H1 (cell line): ENCODE measurements at regions of chr11 and their contacts with region 1.

Region 1: GRCh38 chr11:131038597-131038996 is 122.3 kb upstream of the SNX19 start:
- DNase-seq: no peak
- H3K4me3 ChIP-seq: no peak overlapping the region
- H3K27ac ChIP-seq: no peak overlapping the region
- H3K4me1 ChIP-seq: no peaks in the 10 kb centered on the region
- H3K27me3 ChIP-seq: no peaks in the 10 kb centered on the region
- CTCF ChIP-seq: peak in 2 of 3 experiments; percentile 59 to 68; a peak in 3 of 4 replicates
- EP300 ChIP-seq: no peak
- POLR2A ChIP-seq: no peak
- RAD21 ChIP-seq: peak; percentile 76 to 79

Region 2: GRCh38 chr11:131025020-131025419 is 13.6 kb before region 1 on chr11:
- CTCF ChIA-PET with region 1: interaction called, 63 read pairs
- POLR2A ChIA-PET with region 1: interaction called, 3 read pairs
- DNase-seq: no peak
- H3K4me3 ChIP-seq: no peak overlapping the region
- H3K27ac ChIP-seq: no peak overlapping the region
- H3K4me1 ChIP-seq: no peaks in the 10 kb centered on the region
- H3K27me3 ChIP-seq: no peaks in the 10 kb centered on the region
- CTCF ChIP-seq: peak; percentile 72 to 93 (median 82)
- EP300 ChIP-seq: no peak
- POLR2A ChIP-seq: no peak
- RAD21 ChIP-seq: peak; percentile 93 to 94

Region 3: DNA sequence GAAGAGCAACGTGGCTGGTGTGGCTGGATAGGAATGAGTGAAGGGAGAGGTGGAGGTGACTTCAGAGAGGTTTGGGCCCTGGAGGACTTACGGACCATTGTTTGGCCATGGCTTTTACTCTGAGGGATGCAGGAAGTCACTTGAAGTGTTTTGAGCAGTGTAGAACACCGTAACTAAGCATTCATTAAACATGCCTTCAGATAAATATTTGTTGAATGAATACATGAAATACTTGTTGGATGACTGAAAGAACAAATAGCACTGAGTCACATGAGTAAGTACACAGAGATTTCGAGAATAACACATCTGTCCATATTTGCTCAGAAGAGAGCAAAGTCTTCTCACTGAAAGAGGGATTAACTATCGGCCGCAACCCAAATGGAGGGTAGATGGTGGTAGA is 60.4 kb after region 1 on chr11:
- CTCF ChIA-PET with region 1: no interaction called
- POLR2A ChIA-PET with region 1: no interaction called
- DNase-seq: no peak
- H3K4me3 ChIP-seq: no peak overlapping the region
- H3K27ac ChIP-seq: no peak overlapping the region
- H3K4me1 ChIP-seq: peaks cover 0 to 4% (median 1%) of the 10 kb centered on the region in 4 experiments; a peak in 2 of 7 replicates
- H3K27me3 ChIP-seq: no peaks in the 10 kb centered on the region
- CTCF ChIP-seq: no peak
- EP300 ChIP-seq: no peak
- POLR2A ChIP-seq: no peak
- RAD21 ChIP-seq: no peak